Right ventricle myocardium superior (tissue), 1 donor: ENCODE measurements at regions of chr2 and their contacts with region 1.

Region 1: DNA sequence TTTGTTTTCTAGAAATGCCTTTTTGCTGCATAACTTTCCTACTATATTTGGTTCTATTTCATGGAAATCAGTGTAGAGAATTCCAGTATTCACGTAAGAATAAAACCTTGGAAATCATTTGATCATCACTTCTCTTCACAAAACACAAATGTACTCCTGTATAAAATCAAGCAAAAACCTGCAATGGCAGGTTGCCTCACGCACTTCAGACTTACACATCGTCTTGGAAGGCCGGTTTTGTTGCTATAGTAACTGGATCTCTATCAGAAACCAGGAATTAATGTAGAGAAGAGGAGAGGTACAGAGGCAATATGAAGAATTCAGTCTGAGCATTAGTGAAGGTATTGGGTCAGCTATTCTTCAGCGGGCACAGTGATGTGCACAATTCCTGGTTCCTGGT is 370.7 kb upstream of the CYRIA start:
- DNase-seq: no peak
- ATAC-seq: no peak

Region 2: DNA sequence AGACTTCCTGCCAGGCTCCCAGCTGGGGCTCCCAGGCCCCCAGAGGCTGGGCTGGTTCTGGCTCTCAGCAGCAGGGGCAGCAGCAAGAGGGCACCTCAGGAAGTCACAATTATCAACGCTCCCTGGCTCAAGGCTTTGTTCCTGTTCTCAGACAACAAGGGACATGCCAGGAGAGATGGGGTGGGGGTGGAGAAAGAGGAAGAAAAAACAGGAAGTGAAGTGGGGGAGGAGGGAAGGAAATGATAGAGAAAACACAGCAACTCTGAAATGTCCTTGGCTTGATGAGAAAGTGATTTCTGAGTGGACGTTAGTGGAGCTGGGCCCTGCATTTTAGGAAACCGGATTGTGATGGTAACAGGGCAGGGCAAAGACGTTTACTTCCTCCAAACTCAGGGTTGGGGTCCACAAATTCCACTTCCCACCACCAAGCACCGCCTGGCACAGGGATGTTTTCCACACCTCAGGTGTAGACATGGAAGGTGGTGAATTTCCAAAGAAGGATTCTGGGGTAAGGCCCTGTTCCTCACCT is 411.1 kb before region 1 on chr2:
- intact Hi-C with region 1: no loop called
- DNase-seq: no peak
- ATAC-seq: peak; percentile 70

Region 3: GRCh38 chr2:16948053-16948452 is 88.3 kb before region 1 on chr2:
- intact Hi-C with region 1: no loop called
- DNase-seq: no peak
- ATAC-seq: no peak

Region 4: DNA sequence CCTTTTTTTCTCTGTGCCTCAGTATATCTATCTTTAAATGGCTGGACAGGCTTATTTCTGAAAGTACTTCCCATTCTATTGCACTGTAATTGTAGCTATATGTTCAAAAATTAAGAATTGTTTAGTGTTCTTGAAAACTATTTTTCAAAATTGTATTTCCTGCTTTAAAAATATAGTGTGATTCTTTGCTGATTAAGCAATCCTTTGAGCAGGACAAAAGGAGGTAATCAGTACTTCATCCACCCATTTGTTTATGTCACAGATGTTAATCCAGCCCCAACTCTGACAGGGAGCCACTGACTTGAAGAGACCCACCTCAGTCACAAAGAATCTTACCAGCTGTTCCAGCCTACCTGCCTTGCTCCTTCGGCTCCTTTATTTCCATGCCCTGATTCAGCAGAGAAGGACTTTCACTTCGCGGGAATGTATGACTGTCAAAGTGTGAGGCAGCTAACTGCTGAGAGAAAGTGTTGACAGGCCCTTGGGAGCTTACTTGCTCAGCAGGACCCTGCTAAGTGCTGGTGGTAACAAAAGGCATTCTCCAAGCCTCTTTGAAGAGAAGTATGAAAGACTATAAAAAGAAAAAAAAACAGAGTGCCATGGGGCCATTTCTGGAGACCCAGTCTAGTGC is 22.5 kb after region 1 on chr2:
- intact Hi-C with region 1: loop called (anchors 2 kb)
- DNase-seq: no peak
- ATAC-seq: no peak

Region 5: DNA sequence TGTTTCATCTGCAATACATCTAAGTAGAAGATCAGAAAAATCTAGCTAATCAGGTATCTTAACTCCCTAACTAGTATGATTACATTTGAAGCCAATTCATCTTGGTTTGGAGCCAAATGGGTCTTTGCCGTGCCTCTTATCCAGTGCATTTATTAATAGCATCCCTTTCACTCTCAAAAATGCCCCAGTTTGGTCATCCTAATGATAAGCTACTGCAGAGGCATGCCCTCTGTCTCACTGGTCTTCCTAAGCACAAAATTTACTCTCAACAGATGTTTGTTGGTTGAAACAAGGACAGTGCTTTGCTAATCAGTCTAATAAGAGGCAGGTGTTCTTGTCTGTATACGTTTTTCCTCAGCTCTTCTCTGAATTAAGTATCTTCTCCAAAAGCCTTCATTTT is 78.7 kb after region 1 on chr2:
- intact Hi-C with region 1: no loop called
- DNase-seq: no peak
- ATAC-seq: no peak

Region 6: DNA sequence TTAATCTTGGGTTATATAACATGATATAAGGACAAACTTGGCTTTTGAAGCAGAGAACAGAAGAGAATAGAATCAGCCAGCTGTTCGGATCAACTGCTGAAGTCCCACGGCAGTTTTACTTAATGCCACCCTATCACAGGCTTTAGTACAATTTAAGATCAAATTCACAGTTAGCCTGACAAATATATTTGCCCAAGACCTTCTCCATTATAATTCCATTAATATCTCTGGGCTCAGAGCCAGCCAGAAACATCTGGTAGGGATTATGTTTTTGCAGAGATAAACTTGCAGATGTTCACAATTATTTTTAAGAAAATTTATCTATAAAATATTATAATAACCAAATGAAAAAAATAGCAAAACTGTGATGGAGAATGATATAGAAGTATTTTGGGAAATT is 100.5 kb after region 1 on chr2:
- intact Hi-C with region 1: no loop called
- DNase-seq: no peak
- ATAC-seq: no peak